Astrocyte of the cerebellum (primary cell): ENCODE measurements at regions of chr2 and their contacts with region 1.

Region 1: DNA sequence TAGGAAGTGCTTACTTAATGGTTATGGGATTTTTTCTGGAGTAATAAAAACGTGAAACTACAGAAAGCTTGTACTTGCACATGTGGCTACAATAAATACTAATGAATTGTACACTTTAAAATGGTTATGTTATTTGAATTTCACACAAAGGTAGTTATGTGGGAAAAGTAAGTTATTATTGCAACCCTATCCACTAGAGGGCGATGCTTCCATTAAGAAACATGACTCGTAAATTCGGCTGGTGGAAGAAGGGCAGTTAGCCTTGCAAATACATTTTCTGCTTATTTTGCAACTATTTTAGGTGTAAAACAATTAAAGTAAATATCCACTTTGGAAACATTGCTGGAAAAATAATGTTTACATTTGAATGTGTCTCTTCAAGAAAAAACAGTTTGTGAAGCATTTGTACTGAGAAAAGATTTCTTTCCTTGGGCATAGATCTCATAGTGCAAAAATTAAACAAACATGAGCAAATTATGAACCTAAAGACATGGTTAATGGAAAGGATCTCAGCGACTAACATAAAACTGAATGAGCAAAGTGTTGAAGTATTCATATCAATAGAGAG is 68.1 kb upstream of the CSRNP3 start:
- DNase-seq: peak; percentile 83
- H3K4me3 ChIP-seq: no peak overlapping the region
- CTCF ChIP-seq: peak; percentile 59

Region 2: GRCh38 chr2:165436559-165436958 is 35.2 kb after region 1 on chr2:
- in situ Hi-C with region 1: no loop called
- DNase-seq: no peak
- H3K4me3 ChIP-seq: no peak overlapping the region
- CTCF ChIP-seq: no peak

Region 3: GRCh38 chr2:165456027-165456426 is 54.7 kb after region 1 on chr2:
- in situ Hi-C with region 1: no loop called
- DNase-seq: no peak
- H3K4me3 ChIP-seq: no peak overlapping the region
- CTCF ChIP-seq: no peak

Region 4: GRCh38 chr2:165469417-165469816 is 68.0 kb after region 1 on chr2 and contains the start of gene CSRNP3:
- in situ Hi-C with region 1: no loop called
- DNase-seq: peak; percentile 82
- H3K4me3 ChIP-seq: peak within 1 kb of the TSS; percentile 51
- CTCF ChIP-seq: peak; percentile 4

Region 5: GRCh38 chr2:165778653-165779451 is 377.5 kb after region 1 on chr2:
- in situ Hi-C with region 1: no loop called
- DNase-seq: no peak
- H3K4me3 ChIP-seq: no peak overlapping the region
- CTCF ChIP-seq: no peak

Region 6: DNA sequence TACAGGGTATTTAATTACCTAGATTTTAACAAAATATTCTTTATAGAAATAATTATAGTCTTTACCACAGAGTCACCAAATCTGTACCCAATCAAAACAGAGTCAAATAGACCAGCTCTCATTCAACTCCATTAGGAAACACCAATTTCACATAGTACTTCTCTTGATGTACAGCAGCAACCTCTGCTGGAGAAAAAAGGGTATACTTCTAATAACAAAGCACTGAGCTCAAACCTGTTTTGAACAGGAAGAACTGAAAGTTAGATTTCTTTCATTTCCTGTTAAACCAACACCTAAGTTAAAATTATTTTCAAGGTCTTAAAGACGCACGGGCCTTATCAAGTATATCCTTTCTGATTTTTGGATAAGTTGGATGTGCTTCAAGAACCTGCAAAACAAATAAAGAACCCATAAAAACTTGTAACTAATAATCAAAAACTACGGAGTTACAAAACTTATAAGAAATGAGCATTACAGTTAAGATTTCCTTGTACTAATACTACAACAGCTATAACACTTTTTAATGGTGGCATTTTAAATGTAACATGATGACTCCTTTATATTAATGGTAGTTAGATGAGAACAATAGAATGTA is 473.2 kb after region 1 on chr2:
- in situ Hi-C with region 1: loop called (anchors 5 kb)
- DNase-seq: peak; percentile 73
- H3K4me3 ChIP-seq: no peak overlapping the region
- CTCF ChIP-seq: peak; percentile 59